Gastrocnemius medialis (tissue), 4 donors: ENCODE measurements at regions of chr11 and their contacts with region 1.

Region 1: GRCh38 chr11:6825231-6825744 is 20.2 kb upstream of the OR10A5 start:
- DNase-seq: no peak
- ATAC-seq: no peak
- H3K4me3 ChIP-seq: no peak overlapping the region
- H3K27ac ChIP-seq: no peak overlapping the region
- H3K4me1 ChIP-seq: no peaks in the 10 kb centered on the region
- H3K27me3 ChIP-seq: no peaks in the 10 kb centered on the region
- CTCF ChIP-seq: no peak
- POLR2A ChIP-seq: no peak

Region 2: GRCh38 chr11:6576471-6577373 is 248.6 kb before region 1 on chr11:
- in situ Hi-C with region 1: no loop called
- intact Hi-C with region 1: no loop called
- DNase-seq: no peak
- ATAC-seq: no peak
- H3K4me3 ChIP-seq: no peak overlapping the region
- H3K27ac ChIP-seq: peak overlapping the region; percentile 16 to 59 (median 22)
- H3K4me1 ChIP-seq: peaks cover 1 to 9% of the 10 kb centered on the region in 2 donors
- H3K27me3 ChIP-seq: no peaks in the 10 kb centered on the region
- CTCF ChIP-seq: no peak
- POLR2A ChIP-seq: no peak

Region 3: GRCh38 chr11:6812390-6813005 is 12.8 kb before region 1 on chr11:
- in situ Hi-C with region 1: no loop called
- intact Hi-C with region 1: no loop called
- DNase-seq: no peak
- ATAC-seq: no peak
- H3K4me3 ChIP-seq: no peak overlapping the region
- H3K27ac ChIP-seq: no peak overlapping the region
- H3K4me1 ChIP-seq: no peaks in the 10 kb centered on the region
- H3K27me3 ChIP-seq: no peaks in the 10 kb centered on the region
- CTCF ChIP-seq: peak; percentile 20 to 79 (median 61)
- POLR2A ChIP-seq: no peak

Region 4: DNA sequence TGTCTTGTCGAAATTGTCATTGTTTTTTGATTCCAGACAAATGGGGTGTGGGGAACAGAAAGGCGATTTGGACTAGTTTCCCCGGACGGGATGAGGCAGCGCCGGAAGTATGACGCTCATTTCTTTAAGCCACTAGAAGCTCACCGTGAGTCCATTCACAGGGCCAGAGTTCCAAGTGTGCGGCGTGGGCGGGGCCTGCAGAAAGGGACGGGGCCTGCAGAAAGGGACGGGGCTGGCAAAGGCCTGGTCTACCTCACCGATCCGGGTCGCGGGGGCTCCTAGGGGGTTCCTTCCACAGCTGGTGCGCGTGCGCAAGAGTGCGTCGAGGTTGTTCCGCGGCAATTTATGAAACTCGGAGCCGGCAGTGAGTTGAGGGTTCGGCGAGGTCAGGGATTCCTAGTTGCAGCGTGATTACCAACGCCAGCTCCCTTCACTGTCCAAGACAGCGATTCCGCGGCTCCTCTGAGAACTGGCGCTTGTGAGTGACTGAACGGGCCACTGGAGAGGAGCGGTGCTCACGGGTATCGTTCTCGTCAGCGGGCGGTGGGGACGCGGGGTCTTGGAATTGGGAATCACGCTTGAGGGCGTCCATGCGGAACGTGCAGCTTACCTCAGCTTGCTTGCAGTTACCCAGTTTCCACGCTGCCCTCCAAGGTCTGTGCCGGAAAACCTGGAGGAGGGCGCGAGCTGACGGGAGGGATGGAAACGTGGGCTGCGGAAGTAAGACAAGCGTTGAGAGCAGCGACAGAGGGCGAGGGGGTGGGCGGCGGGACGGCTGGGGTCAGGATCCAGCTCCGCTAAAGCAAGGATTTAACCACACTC is 101.1 kb after region 1 on chr11 and contains the start of gene ZNF215:
- in situ Hi-C with region 1: loop called in 1 of 4 experiments (anchors 25 kb)
- intact Hi-C with region 1: no loop called
- DNase-seq: peak; percentile 19 to 37
- ATAC-seq: peak; percentile 33 to 56
- H3K4me3 ChIP-seq: peak within 1 kb of the TSS; percentile 57 to 68 (median 64)
- H3K27ac ChIP-seq: peak within 1 kb of the TSS; percentile 23 to 51 (median 44)
- H3K4me1 ChIP-seq: peaks cover 0 to 7% of the 10 kb centered on the region in 2 donors
- H3K27me3 ChIP-seq: no peaks in the 10 kb centered on the region
- CTCF ChIP-seq: no peak
- POLR2A ChIP-seq: no peak
- total RNA-seq, gene ZNF215: 0.36 to 0.44 (median 0.39) TPM in 3 of 4 donors, not detected in the other